OCI-LY7 (cell line): ENCODE measurements at regions of chr10 and their contacts with region 1.

Region 1: GRCh38 chr10:119305860-119306513 is 98.6 kb downstream of the GRK5 start:
- DNase-seq: peak; percentile 96
- H3K4me3 ChIP-seq: peak overlapping the region; percentile 67
- H3K27ac ChIP-seq: peak overlapping the region; percentile 97
- H3K4me1 ChIP-seq: peaks cover 96% of the 10 kb centered on the region
- CTCF ChIP-seq: no peak

Region 2: DNA sequence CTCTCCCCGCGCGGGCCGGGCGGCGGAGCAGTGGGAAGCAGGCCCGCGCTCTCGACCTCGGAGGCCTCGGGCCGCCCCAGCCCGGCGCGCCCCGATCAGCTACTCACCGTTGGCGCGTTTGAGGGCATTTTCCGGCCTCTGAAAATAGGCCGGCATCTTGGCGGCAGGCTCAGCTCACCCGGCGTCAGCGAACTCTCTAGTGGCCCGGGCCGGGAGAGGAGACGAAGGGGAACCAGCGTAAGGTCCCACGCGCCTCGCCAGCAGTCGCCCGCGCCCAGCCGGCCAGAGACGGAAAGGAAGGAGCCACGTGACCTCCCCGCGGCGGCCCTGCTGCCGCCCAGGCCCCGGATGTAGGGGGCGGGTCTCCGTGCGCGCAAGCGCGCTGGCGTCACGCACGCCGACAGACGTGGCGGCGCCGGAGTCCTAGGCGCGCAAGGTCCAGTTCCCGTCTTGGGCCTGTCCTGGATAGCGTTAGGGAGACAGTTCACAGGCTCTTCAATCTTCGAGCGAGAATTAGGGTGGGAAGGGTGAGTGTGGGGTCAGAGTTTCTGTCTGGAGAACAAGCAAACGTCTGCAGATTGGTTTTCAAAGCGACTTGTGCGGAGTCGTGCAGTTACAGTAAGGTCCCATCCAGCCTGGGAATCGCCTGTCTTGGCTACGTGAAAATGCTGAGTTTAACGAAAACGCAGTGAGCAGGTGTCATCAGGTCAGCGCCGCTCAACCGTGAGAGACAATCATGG is 225.3 kb before region 1 on chr10 and contains the start of gene EIF3A:
- CTCF ChIA-PET with region 1: no interaction called
- POLR2A ChIA-PET with region 1: no interaction called
- intact Hi-C with region 1: loop called (anchors 5 kb)
- DNase-seq: peak; percentile 94
- H3K4me3 ChIP-seq: peak within 1 kb of the TSS; percentile 79
- H3K27ac ChIP-seq: peak within 1 kb of the TSS; percentile 70
- H3K4me1 ChIP-seq: peaks cover 45% of the 10 kb centered on the region
- CTCF ChIP-seq: no peak
- total RNA-seq, gene EIF3A: 83.0 and 96.2 TPM in 2 replicates

Region 3: DNA sequence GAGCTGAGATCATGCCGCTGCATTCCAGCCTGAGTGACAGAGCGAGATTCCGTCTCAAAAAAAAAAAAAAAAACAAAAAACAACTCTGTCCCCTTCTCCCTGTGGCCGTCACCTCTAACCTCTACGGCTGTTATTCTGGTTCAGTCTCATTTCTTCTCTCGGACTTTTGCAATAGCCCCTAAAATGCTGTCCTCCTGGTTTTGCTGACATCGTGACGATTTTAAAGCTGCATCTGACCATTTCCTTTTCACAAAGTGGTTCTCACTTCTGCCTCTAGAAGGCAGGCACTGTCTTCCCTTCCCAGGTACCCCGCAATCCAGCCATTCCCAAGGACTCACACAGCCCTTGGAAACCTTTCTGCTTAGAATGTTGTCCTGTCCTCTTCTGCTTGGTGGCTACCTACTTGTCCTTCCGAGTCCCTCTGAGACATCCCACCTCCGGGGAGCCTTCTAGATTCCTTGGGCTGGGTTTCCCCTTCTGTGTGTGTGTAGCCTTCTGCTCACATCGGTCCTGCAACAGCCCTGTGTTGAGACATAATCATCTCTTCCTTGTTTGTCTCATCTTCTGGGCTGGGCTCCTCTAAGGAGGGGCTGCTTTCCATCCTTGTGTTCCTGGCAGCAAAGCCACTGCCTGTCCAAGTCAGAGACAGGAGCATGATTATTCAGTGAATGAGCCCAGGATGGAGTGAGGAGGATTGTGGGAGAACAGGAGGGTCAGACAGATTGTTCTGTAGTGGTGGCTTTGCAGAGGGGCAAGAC is 15.5 kb before region 1 on chr10:
- CTCF ChIA-PET with region 1: interaction called, 4 read pairs
- POLR2A ChIA-PET with region 1: interaction called, 12 read pairs
- intact Hi-C with region 1: no loop called
- DNase-seq: no peak
- H3K4me3 ChIP-seq: no peak overlapping the region
- H3K27ac ChIP-seq: no peak overlapping the region
- H3K4me1 ChIP-seq: peaks cover 52% of the 10 kb centered on the region
- CTCF ChIP-seq: no peak

Region 4: GRCh38 chr10:119368991-119369869 is 63.2 kb after region 1 on chr10:
- CTCF ChIA-PET with region 1: no interaction called
- POLR2A ChIA-PET with region 1: interaction called, 3 read pairs
- intact Hi-C with region 1: loop called (anchors 1 kb)
- DNase-seq: peak; percentile 94
- H3K4me3 ChIP-seq: peak overlapping the region; percentile 59
- H3K27ac ChIP-seq: peak overlapping the region; percentile 69
- H3K4me1 ChIP-seq: peaks cover 39% of the 10 kb centered on the region
- CTCF ChIP-seq: no peak

Region 5: DNA sequence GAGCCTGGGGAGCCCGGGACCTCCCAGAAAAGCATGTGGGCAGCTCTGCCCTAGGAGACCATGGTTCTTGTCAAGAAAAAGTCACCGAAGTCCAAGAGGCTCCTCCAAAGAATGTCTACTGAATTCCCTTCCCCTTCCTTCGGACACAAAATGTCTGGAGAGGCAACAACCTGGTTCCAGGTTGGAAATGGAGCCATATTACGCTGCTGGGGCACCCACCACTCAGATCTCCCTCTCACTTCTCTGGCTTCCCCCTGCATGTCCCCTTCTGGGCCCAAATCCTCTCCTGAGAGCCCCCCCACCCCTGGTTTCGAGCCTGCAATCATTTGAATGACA is 184.0 kb after region 1 on chr10:
- CTCF ChIA-PET with region 1: interaction called, 3 read pairs
- POLR2A ChIA-PET with region 1: interaction called, 4 read pairs
- intact Hi-C with region 1: loop called (anchors 2 kb)
- DNase-seq: no peak
- H3K4me3 ChIP-seq: peak overlapping the region; percentile 68
- H3K27ac ChIP-seq: no peak overlapping the region
- H3K4me1 ChIP-seq: peaks cover 14% of the 10 kb centered on the region
- CTCF ChIP-seq: peak; percentile 49

Region 6: GRCh38 chr10:119542988-119543813 is 237.2 kb after region 1 on chr10:
- CTCF ChIA-PET with region 1: no interaction called
- POLR2A ChIA-PET with region 1: no interaction called
- intact Hi-C with region 1: loop called (anchors 1 kb)
- DNase-seq: peak; percentile 85
- H3K4me3 ChIP-seq: peak overlapping the region; percentile 69
- H3K27ac ChIP-seq: no peak overlapping the region
- H3K4me1 ChIP-seq: peaks cover 47% of the 10 kb centered on the region
- CTCF ChIP-seq: peak; percentile 97